Gastrocnemius medialis (tissue), 4 donors: ENCODE measurements at regions of chr11 and their contacts with region 1.

Region 1: GRCh38 chr11:117098269-117099232 is at the start of gene SIK3:
- DNase-seq: peak; percentile 83 to 90
- ATAC-seq: peak; percentile 73 to 75
- H3K4me3 ChIP-seq: peak within 1 kb of the TSS; percentile 75 to 99 (median 88)
- H3K27ac ChIP-seq: peak within 1 kb of the TSS; percentile 90 to 97 (median 92)
- H3K4me1 ChIP-seq: peaks cover 41 to 45% of the 10 kb centered on the region in 2 donors
- H3K27me3 ChIP-seq: no peaks in the 10 kb centered on the region
- CTCF ChIP-seq: peak in 3 of 5 experiments; percentile 50 to 68 (median 59)
- POLR2A ChIP-seq: peak; percentile 55 to 69
- total RNA-seq, gene SIK3: 34.4 to 42.4 (median 37.2) TPM

Region 2: DNA sequence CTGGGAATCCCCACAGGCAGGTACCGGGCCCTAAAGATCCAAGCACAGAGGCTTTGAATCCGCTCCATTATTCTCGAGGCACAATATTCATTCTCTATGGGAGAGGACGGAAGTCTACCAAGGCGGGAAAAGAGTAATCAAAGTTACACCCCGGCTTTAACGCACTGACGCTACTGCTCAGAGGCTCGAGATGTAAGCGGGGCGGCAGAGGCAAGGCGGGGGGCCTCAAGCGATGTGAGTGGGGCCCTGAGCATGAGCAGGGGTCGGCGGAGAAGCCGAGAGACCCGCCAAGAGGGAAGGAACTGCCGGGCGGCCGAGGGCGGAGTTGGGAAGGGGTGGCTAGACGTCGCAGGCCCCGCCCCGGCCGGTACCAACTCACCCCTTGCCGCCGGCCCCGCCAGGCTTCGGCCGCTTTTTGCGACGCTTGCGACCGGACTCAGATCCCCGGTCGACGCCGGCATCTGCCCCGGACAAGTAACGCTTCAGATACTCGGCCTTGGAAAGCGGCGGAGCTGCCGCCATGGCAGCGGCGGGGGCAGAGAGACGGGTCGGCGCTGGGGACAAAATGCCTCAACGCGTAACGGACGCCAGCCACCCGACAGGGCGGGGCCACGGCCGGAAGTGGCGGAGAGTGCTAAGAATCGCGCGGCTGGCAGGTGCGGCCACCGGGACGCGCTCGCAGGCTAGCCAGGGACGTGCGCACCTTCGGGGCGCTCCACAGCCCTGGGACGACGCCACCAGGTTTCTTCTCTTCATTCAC is 325.9 kb before region 1 on chr11 and contains the start of gene BUD13:
- in situ Hi-C with region 1: no loop called
- intact Hi-C with region 1: loop called (anchors 5 kb)
- DNase-seq: peak; percentile 80 to 84
- ATAC-seq: peak; percentile 90 to 95
- H3K4me3 ChIP-seq: peak within 1 kb of the TSS; percentile 71 to 98 (median 89)
- H3K27ac ChIP-seq: peak within 1 kb of the TSS; percentile 91 to 96 (median 95)
- H3K4me1 ChIP-seq: peaks cover 21 to 24% of the 10 kb centered on the region in 2 donors
- H3K27me3 ChIP-seq: no peaks in the 10 kb centered on the region
- CTCF ChIP-seq: no peak
- POLR2A ChIP-seq: peak; percentile 36 to 68
- total RNA-seq, gene BUD13: 9.0 to 14.1 (median 12.3) TPM

Region 3: GRCh38 chr11:116879800-116880625 is 218.5 kb before region 1 on chr11:
- in situ Hi-C with region 1: loop called in 2 of 4 experiments (anchors 5 kb)
- intact Hi-C with region 1: loop called (anchors 2 kb)
- DNase-seq: no peak
- ATAC-seq: peak; percentile 46 to 78
- H3K4me3 ChIP-seq: no peak overlapping the region
- H3K27ac ChIP-seq: no peak overlapping the region
- H3K4me1 ChIP-seq: peaks cover 12 to 16% of the 10 kb centered on the region in 2 donors
- H3K27me3 ChIP-seq: no peaks in the 10 kb centered on the region
- CTCF ChIP-seq: peak; percentile 44 to 70 (median 51)
- POLR2A ChIP-seq: no peak

Region 4: DNA sequence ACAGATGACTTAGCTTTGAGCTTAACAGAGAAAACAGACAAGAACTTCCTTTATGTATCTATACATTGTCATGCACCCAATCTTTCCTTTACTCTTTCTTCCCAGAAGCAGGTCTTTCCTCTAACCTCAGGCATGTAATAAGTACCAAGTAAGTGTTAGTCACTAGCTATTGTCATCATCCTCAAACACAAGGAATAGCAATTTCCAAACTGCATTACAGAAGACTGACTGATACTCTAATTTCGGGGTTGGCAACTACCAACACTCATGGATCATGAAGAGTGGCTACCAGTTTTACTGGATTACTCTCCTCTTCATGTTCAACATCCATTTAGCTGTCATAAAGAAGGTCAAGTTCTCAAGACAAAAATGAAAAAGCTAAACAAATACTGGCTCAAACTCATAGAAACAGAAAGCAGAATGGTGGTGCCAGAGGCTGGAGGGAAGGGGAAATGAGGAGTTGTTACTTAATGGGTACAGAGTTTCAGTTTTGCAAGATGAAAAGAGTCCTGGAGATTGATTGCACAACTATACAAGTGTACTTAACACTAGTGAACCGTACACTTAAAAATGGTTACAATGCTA is 111.9 kb before region 1 on chr11:
- in situ Hi-C with region 1: no loop called
- intact Hi-C with region 1: loop called (anchors 5 kb)
- DNase-seq: peak in 1 of 2 donors; percentile 27
- ATAC-seq: peak; percentile 89 to 93
- H3K4me3 ChIP-seq: no peak overlapping the region
- H3K27ac ChIP-seq: peak overlapping the region; percentile 51 to 66 (median 60)
- H3K4me1 ChIP-seq: peaks cover 51 to 68% of the 10 kb centered on the region in 2 donors
- H3K27me3 ChIP-seq: no peaks in the 10 kb centered on the region
- CTCF ChIP-seq: no peak
- POLR2A ChIP-seq: no peak

Region 5: GRCh38 chr11:117002639-117003299 is 95.8 kb before region 1 on chr11:
- in situ Hi-C with region 1: no loop called
- intact Hi-C with region 1: no loop called
- DNase-seq: no peak
- ATAC-seq: no peak
- H3K4me3 ChIP-seq: no peak overlapping the region
- H3K27ac ChIP-seq: no peak overlapping the region
- H3K4me1 ChIP-seq: peaks cover 20 to 24% of the 10 kb centered on the region in 2 donors
- H3K27me3 ChIP-seq: no peaks in the 10 kb centered on the region
- CTCF ChIP-seq: no peak
- POLR2A ChIP-seq: no peak

Region 6: DNA sequence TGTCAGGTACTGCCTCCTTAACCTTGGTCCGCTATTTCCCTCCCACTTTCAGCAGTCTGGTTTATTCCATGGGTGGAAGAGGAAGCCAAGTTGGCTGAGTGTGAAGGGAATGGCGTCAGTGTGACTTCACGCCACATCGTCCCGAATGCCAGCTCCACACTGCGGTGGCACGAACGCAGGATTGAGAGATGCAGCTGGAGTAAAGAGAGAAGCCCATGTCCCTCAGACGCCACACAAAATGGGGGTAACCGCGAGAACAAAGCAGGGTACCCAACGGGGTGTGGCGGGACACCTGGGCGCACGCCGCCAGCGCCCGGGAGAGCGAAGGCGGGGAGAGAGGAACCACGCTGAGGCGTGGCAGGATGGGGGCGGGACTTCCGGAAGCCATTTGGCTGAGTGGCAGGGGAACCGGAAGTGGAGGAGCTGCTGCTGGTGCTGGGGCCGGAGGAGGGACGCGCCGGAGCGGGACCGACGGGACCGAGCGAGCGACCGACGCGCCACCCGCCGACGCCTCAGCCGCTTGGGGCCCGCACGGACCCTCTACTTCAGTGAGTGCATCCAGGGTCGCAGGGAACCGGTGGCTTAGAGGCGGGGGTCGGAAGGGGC is 45.4 kb after region 1 on chr11 and contains the start of gene PAFAH1B2:
- in situ Hi-C with region 1: no loop called
- intact Hi-C with region 1: loop called (anchors 1 kb)
- DNase-seq: peak; percentile 93 to 94
- ATAC-seq: peak; percentile 94 to 96
- H3K4me3 ChIP-seq: peak within 1 kb of the TSS; percentile 77 to 92 (median 82)
- H3K27ac ChIP-seq: peak within 1 kb of the TSS; percentile 84 to 97 (median 92)
- H3K4me1 ChIP-seq: peaks cover 30 to 33% of the 10 kb centered on the region in 2 donors
- H3K27me3 ChIP-seq: peaks cover 0 to 4% (median 0%) of the 10 kb centered on the region in 3 donors
- CTCF ChIP-seq: no peak
- POLR2A ChIP-seq: peak; percentile 87
- total RNA-seq, gene PAFAH1B2: 25.8 to 52.3 (median 35.2) TPM

Region 7: GRCh38 chr11:118171269-118172062 is 1072.9 kb after region 1 on chr11:
- in situ Hi-C with region 1: no loop called
- intact Hi-C with region 1: no loop called
- DNase-seq: peak; percentile 39 to 47
- ATAC-seq: peak; percentile 61 to 70
- H3K4me3 ChIP-seq: no peak overlapping the region
- H3K27ac ChIP-seq: peak overlapping the region in 2 of 4 donors; percentile 20 to 24
- H3K4me1 ChIP-seq: peaks cover 24 to 29% of the 10 kb centered on the region in 2 donors
- H3K27me3 ChIP-seq: no peaks in the 10 kb centered on the region
- CTCF ChIP-seq: peak; percentile 84 to 92 (median 89)
- POLR2A ChIP-seq: no peak